ENCODE measurements at regions of chr1 and their contacts with region 1.

Region 1: GRCh38 chr1:11813021-11813420 is 7.0 kb downstream of the CLCN6 start:
- DNase-seq: no peak
- H3K4me3 ChIP-seq: no peak overlapping the region
- CTCF ChIP-seq: no peak

Region 2: DNA sequence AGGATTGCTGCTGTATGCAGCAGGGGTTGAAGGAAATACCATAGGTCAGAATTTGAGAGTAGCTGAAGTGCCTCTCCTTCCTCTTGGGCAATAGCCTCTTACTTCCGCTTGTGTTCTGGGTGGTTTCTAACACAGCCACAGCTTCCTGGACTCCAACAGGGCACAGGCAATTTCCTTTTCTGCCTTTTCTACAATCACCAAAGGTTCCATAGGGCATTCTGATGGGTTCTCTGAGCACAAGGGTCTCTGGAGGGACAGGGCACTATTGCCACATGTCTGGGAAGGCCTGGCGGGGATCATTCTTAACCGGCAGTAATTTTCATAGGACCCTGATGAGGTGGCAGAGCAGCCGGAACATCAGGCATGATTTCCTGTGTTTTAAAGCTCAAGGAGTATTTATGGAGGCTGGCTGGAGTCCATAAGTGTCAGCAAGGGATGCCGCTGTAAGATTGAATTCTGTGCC is 82.6 kb before region 1 on chr1:
- in situ Hi-C with region 1: no loop called
- DNase-seq: no peak
- H3K4me3 ChIP-seq: no peak overlapping the region
- CTCF ChIP-seq: no peak

Region 3: DNA sequence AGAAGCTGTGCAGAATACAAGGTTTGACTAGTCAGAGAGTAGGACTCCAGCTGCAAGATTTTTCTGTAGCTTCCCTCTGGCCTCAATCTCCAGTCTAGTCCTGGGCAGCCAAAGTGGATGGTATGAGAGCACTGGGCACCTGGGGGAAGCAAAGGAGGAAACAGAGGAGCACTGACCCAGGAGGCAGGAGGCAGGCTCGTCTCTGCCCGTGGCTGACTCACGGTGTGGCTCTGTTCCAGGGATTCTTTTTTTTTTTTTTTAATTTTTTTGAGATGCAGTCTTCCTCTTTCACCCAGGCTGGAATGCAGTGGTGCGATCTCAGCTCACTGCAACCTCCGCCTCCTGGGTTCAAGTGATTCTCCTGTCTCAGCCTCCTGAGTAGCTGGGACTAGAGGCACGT is 49.9 kb after region 1 on chr1:
- in situ Hi-C with region 1: loop called (anchors 5 kb)
- DNase-seq: no peak
- H3K4me3 ChIP-seq: no peak overlapping the region
- CTCF ChIP-seq: no peak

Measured in astrocyte of the cerebellum (primary cell).